ENCODE measurements at regions of chr14 and their contacts with region 1.

Region 1: GRCh38 chr14:63470962-63471793 is 72.0 kb downstream of the PPP2R5E start:
- DNase-seq: peak; percentile 96
- ATAC-seq: peak; percentile 87
- H3K4me3 ChIP-seq: peak overlapping the region; percentile 25; the same call in 1 of the 2 replicates
- H3K27ac ChIP-seq: peak overlapping the region; percentile 89
- H3K4me1 ChIP-seq: peaks cover 55% of the 10 kb centered on the region
- H3K27me3 ChIP-seq: no peaks in the 10 kb centered on the region
- CTCF ChIP-seq: no peak

Region 2: DNA sequence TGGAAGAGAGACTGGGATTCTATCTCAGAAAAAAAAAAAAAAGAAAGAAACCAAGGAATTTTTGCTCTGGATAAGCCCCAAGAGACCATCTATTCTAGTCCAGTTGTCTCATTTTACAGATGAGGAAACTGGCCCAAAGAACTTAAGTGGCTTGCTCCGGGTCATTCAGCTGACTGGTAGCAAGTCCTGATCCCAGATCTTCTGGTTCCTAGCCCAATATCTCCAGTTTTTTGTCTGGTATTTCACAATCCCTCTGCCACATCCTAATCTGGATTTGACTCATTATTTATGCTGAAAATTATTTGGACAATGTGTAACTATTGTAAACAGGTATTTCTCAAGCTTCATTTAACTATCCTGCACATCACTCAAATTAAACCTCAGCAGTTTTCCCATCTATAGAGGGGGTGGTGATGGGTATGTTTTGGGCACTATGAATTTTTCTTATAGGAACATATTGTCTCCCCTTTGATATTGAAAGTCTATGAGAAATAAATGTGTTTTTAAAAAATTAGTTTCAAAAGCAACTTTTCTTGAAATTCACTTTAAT is 28.6 kb after region 1 on chr14:
- CTCF ChIA-PET with region 1: no interaction called
- POLR2A ChIA-PET with region 1: no interaction called
- intact Hi-C with region 1: loop called (anchors 1 kb)
- DNase-seq: peak; percentile 88
- ATAC-seq: peak; percentile 41
- H3K4me3 ChIP-seq: no peak overlapping the region
- H3K27ac ChIP-seq: peak overlapping the region; percentile 72
- H3K4me1 ChIP-seq: peaks cover 49% of the 10 kb centered on the region
- H3K27me3 ChIP-seq: no peaks in the 10 kb centered on the region
- CTCF ChIP-seq: no peak